ENCODE measurements at regions of chr11 and their contacts with region 1.

Region 1: GRCh38 chr11:68546555-68546954 is 86.0 kb downstream of the PPP6R3 start:
- DNase-seq: no peak
- H3K4me3 Mint-ChIP-seq: no peak overlapping the region
- H3K27ac Mint-ChIP-seq: peak overlapping the region; percentile 53
- H3K4me1 Mint-ChIP-seq: peaks cover 69% of the 10 kb centered on the region
- H3K27me3 Mint-ChIP-seq: no peaks in the 10 kb centered on the region

Region 2: GRCh38 chr11:68153742-68154411 is 392.7 kb before region 1 on chr11:
- intact Hi-C with region 1: no loop called
- DNase-seq: no peak
- H3K4me3 Mint-ChIP-seq: no peak overlapping the region
- H3K27ac Mint-ChIP-seq: no peak overlapping the region
- H3K4me1 Mint-ChIP-seq: no peaks in the 10 kb centered on the region
- H3K27me3 Mint-ChIP-seq: peaks cover 3% of the 10 kb centered on the region

Region 3: DNA sequence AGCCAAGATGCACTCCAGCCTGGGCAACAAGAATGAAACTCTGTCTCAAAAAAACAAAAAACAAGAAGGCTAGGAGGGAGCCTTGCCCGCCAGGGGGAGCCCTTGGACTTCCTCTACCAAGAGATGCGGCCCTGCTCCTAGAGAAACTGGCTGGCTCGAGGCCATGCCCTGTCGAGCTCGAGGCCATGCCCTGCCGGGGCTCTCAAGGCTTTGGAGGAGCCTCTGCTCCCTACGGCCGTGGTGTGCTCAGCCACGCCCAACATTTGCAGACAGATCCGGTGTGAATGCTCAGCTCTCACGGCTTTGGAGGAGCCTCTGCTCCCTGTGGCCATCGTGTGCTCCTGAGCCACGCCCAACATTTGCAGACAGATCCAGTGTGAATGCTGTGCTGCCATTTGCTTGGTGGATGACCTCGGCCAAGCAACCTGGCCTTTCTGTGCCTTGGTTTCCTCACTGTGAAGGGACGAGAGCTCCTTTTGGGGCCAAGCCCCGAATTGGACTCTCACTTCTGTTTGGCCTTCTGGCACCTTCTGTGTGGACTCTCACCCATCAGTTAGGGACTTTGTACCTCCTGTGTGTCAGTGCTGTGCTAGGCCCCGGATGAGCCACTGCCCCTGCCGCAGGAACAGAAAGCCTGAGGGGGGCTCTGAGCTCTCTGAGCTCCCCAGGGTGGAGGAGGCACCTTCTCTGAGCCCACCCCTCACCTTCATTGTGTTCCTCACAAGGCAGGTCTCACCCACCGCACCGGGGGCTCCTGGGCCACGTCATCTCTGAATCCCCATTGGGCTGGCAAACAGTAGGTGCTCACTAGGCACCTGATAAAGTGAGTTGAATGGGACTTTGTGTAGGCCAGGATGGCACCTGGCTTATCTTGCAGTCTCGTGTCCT is 288.8 kb before region 1 on chr11:
- intact Hi-C with region 1: no loop called
- DNase-seq: peak; percentile 83
- H3K4me3 Mint-ChIP-seq: no peak overlapping the region
- H3K27ac Mint-ChIP-seq: no peak overlapping the region
- H3K4me1 Mint-ChIP-seq: peaks cover 5% of the 10 kb centered on the region
- H3K27me3 Mint-ChIP-seq: peaks cover 4% of the 10 kb centered on the region

Region 4: DNA sequence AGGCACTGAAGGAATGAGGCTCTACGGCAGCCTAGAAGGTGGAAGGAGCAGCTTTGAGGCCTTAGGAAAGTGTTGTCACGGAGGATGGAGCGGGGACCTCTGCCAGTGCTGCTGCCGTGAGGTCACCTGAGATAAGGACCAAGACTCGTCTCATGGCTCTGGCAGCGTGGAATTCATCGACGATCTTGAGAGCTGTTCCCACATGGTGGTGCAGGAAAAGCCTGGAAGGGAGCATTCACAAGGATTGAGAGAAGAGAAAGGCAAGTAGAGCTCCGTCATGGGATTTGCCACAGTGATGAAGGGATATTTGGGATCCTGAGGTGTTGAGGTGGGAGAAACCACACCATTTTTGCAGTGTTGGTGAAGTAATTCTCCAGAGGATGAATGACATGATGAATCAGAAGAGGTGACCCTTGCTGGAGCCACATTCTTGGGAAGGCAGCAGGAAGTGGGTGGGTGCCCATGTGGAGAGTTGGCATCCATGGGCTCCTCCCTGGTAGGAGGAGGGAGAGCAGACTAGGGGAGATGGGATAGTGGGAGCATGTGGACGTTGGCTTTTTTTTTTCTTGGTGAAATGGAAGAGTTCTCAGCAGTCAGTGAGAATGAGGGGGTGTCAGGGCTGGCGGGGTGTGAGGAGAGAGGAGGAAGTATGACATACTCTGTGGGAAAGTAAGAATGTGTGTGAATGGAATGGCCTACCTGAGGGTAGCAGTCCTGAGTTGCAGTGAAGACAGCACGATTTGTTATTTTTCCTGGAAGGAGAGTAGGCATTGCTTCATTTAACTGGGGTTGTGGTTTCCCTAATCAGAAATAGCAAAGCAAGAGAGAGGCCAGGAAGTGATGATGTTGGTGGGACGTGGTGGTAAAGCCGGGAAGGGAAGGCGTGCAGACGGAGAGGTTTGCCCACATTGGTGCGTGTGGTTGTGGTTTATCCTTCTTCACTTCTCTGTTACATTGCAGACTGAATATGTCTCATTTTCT is 74.9 kb before region 1 on chr11:
- intact Hi-C with region 1: loop called (anchors 2 kb)
- DNase-seq: peak; percentile 56
- H3K4me3 Mint-ChIP-seq: peak overlapping the region; percentile 71
- H3K27ac Mint-ChIP-seq: peak overlapping the region; percentile 77
- H3K4me1 Mint-ChIP-seq: peaks cover 75% of the 10 kb centered on the region
- H3K27me3 Mint-ChIP-seq: no peaks in the 10 kb centered on the region

Region 5: GRCh38 chr11:68481579-68482240 is 64.8 kb before region 1 on chr11:
- intact Hi-C with region 1: no loop called
- DNase-seq: no peak
- H3K4me3 Mint-ChIP-seq: no peak overlapping the region
- H3K27ac Mint-ChIP-seq: no peak overlapping the region
- H3K4me1 Mint-ChIP-seq: peaks cover 46% of the 10 kb centered on the region
- H3K27me3 Mint-ChIP-seq: no peaks in the 10 kb centered on the region

Region 6: DNA sequence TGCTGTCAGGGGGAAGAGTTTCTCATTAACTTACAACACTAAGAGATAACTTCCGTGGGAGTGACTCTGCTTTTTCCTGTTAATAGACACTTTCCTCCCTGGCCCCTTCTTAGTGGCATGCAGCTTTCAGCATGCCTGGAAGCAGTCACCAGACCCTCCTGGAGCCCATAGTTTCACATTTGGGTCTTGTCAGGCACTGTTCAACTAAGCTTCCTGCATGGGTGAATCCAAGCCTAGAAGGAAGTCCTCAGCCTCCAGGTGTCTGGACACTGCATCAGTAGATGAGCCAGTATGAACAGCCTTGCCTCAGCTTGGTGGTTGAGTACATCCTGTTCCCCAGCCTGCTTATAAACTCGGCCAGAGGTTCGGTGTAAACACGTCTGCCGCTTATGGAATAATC is 17.9 kb before region 1 on chr11:
- intact Hi-C with region 1: loop called (anchors 2 kb)
- DNase-seq: peak; percentile 8
- H3K4me3 Mint-ChIP-seq: no peak overlapping the region
- H3K27ac Mint-ChIP-seq: peak overlapping the region; percentile 53
- H3K4me1 Mint-ChIP-seq: peaks cover 73% of the 10 kb centered on the region
- H3K27me3 Mint-ChIP-seq: no peaks in the 10 kb centered on the region

Region 7: GRCh38 chr11:68569357-68569756 is 22.8 kb after region 1 on chr11:
- intact Hi-C with region 1: loop called (anchors 2 kb)
- DNase-seq: no peak
- H3K4me3 Mint-ChIP-seq: no peak overlapping the region
- H3K27ac Mint-ChIP-seq: no peak overlapping the region
- H3K4me1 Mint-ChIP-seq: peaks cover 43% of the 10 kb centered on the region
- H3K27me3 Mint-ChIP-seq: no peaks in the 10 kb centered on the region

Measured in activated T-helper 1 cell treated with anti-CD3 and anti-CD28 coated beads, Interleukin-12 subunit alpha, Interleukin-12 subunit beta, Interleukin-2, Interleukin-4 antibody, amounts not matched to agents 30 ng/mL and 10 ng/mL and 1 ng/mL, durations not matched to agents 14 hours and 24 hours and 36 hours (primary cell).